Ovary (tissue), 10 donors: ENCODE measurements at regions of chr9 and their contacts with region 1.

Region 1: DNA sequence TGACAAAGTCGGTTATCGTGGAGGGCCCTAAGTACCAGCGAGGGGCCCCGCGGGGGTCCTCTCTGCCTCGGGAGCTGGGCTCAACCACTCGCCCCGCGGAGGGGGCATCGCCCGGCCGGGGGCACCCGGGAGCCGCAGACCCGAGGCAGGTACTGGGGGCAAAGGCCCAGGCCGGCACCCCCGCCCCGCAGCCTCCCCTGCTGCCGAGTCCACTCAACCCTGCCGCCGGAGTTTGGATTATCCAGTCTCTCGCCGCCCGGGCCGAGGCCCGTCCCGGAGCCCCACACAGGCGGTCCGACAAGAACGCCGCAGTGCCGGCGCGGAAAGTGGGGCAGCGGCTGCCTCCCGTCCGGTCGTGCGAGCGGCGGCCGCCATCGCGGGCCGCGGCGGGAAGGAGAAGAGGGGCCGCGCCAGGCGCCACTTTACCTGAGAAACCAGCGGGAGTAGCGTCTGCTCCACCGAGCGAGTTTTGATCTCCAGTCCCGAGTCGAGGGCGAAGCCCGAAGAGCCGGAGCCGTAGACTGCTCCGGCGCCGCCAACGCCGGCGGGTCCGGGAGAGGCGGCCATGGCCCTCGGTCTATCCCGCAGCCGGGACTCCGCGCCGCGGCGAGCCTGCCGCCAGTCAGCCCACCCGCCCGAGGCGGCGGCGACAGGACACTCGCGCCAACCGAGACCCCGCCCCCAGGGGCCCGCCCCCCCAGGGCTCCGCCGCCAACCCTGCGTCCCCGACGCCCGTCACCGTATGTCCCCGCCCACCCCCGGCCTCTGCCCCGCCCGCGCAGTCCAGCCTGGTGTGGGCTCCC is at the start of gene CTNNAL1:
- DNase-seq: peak; percentile 96 to 97 (median 96)
- H3K4me3 ChIP-seq: peak within 1 kb of the TSS; percentile 97
- H3K27ac ChIP-seq: peak within 1 kb of the TSS; percentile 91 to 97
- H3K4me1 ChIP-seq: peaks cover 20% of the 10 kb centered on the region
- H3K27me3 ChIP-seq: no peaks in the 10 kb centered on the region
- CTCF ChIP-seq: no peak
- EP300 ChIP-seq: no peak
- POLR2A ChIP-seq: peak; percentile 81
- total RNA-seq, gene CTNNAL1: 82.4 to 238 (median 137) TPM

Region 2: DNA sequence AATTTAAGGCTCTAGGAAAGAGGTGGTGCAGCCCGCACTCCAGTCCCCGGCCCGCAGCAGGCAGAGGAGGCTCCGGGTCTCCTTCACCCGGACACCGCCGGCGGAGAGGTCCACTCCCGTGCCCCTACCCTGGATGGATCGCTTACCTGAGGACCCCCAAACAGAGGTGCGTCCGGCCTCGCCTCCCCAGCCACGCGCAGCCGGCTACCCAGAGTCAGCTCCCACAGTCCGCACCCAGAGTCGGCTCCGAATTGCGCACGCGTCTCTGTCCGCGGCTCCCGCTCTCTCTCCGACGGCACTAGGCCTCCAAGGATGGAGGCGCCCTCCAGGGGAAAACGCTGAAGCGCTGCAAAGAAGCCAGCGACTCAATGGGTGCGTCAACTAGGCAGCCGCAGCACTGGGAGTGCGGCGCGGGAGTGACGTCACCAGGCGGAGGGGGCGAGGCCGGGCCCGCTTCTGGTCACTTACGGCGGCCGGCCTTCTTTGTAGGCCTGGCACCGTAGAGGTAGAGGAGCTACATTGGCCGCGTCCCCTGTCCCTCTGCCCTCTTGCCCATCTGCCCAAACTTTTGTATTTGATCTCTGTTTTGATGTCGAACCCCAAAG is 79.3 kb before region 1 on chr9 and contains the start of gene ELP1:
- intact Hi-C with region 1: loop called in 1 of 4 experiments (anchors 1 kb)
- DNase-seq: peak; percentile 91 to 95 (median 94)
- H3K4me3 ChIP-seq: peak within 1 kb of the TSS; percentile 44
- H3K27ac ChIP-seq: peak within 1 kb of the TSS; percentile 69 to 87
- H3K4me1 ChIP-seq: peaks cover 5% of the 10 kb centered on the region
- H3K27me3 ChIP-seq: no peaks in the 10 kb centered on the region
- CTCF ChIP-seq: peak in 2 of 3 donors; percentile 18
- EP300 ChIP-seq: no peak
- POLR2A ChIP-seq: peak; percentile 54
- total RNA-seq, gene ELP1: 17.9 to 70.9 (median 36.5) TPM

Region 3: GRCh38 chr9:108994695-108995094 is 18.4 kb before region 1 on chr9:
- intact Hi-C with region 1: no loop called
- DNase-seq: peak; percentile 31 to 52 (median 50)
- H3K4me3 ChIP-seq: no peak overlapping the region
- H3K27ac ChIP-seq: peak overlapping the region in 1 of 2 donors; percentile 21
- H3K4me1 ChIP-seq: peaks cover 17% of the 10 kb centered on the region
- H3K27me3 ChIP-seq: no peaks in the 10 kb centered on the region
- CTCF ChIP-seq: no peak
- EP300 ChIP-seq: no peak
- POLR2A ChIP-seq: no peak

Region 4: DNA sequence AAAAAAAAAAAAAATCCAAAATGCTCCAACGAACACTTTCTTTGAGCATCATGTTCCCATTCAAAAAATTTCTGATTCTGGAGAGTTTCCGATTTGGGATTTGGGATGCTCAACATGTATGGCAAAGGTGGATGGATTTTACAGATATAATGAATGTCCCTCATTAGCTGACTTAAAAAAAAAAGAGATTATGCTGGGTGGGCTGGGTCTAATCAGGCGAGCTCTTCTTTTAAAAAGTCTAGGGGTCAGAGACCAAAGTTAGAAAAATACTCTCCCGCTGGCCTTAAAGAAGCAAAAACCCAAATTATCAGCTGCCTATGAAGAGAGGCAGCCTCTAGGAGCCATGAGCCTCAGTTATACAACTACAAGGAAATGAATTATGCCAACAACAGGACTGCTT is 15.4 kb after region 1 on chr9:
- intact Hi-C with region 1: loop called in 1 of 4 experiments (anchors 2 kb)
- DNase-seq: no peak
- H3K4me3 ChIP-seq: no peak overlapping the region
- H3K27ac ChIP-seq: peak overlapping the region in 1 of 2 donors; percentile 63
- H3K4me1 ChIP-seq: peaks cover 17% of the 10 kb centered on the region
- H3K27me3 ChIP-seq: no peaks in the 10 kb centered on the region
- CTCF ChIP-seq: no peak
- EP300 ChIP-seq: no peak
- POLR2A ChIP-seq: no peak

Region 5: GRCh38 chr9:109119439-109120203 is 106.5 kb after region 1 on chr9 and contains the start of gene TMEM245:
- intact Hi-C with region 1: loop called in 3 of 4 experiments (anchors 10 kb)
- DNase-seq: peak; percentile 95 to 97 (median 95)
- H3K4me3 ChIP-seq: peak within 1 kb of the TSS; percentile 96
- H3K27ac ChIP-seq: peak within 1 kb of the TSS; percentile 65 to 82
- H3K4me1 ChIP-seq: peaks cover 14% of the 10 kb centered on the region
- H3K27me3 ChIP-seq: no peaks in the 10 kb centered on the region
- CTCF ChIP-seq: peak in 2 of 3 donors; percentile 12 to 29
- EP300 ChIP-seq: no peak
- POLR2A ChIP-seq: peak; percentile 86
- total RNA-seq, gene TMEM245: 51.0 to 91.1 (median 77.4) TPM